ENCODE measurements at regions of chr11 and their contacts with region 1.

Region 1: DNA sequence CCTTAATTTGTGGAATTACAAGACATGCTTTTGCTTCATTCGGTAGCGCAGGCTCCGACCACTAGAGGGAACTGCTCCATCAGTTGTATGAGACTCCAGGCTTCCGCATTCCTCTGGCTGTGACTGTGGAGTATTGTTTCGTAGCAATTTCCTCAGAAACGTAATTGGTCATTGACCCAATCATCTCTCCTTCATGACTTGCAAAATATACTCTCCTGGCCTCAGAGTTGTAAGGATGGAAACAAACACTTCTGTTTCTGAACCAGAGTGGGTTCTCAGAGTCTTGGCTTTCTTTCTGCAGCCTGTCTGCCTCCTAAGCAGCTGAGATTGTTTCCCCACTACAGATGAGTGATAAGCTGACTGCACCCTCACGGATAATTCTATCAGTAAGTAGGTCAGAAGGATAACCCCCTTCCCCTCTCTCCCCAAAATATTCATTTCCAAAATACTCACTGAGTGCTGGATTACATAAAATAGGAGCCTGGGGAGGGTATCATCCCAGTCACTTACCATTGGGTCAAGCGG is 146.8 kb upstream of the ZC3H12C start:
- DNase-seq: peak; percentile 97
- H3K4me3 ChIP-seq: peak overlapping the region in 1 of 3 experiments; percentile 31
- H3K27ac ChIP-seq: peak overlapping the region; percentile 95
- H3K4me1 ChIP-seq: peaks cover 8% of the 10 kb centered on the region
- H3K27me3 ChIP-seq: no peaks in the 10 kb centered on the region
- CTCF ChIP-seq: peak; percentile 91
- POLR2A ChIP-seq: no peak

Region 2: DNA sequence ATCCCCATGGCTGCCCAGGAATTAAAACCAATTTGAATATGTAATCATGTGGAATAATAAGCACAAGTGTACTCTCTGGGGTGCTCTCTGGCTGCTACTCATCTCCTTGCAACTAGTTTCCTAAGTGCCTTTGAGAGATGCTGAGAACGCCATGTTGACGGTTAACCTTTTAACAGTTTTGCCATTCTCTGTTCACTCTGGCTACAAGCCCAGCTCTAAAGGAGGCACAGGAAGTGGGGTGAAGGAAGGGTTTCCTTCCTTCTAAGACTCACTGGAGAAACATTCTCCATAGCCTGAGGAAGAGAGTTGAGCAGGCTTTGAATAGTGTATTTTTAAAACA is 24.8 kb after region 1 on chr11:
- CTCF ChIA-PET with region 1: interaction called, 4 read pairs
- POLR2A ChIA-PET with region 1: no interaction called
- dilution Hi-C with region 1: no loop called
- intact Hi-C with region 1: loop called (anchors 1 kb)
- DNase-seq: peak; percentile 94
- H3K4me3 ChIP-seq: peak overlapping the region in 1 of 3 experiments; percentile 53
- H3K27ac ChIP-seq: peak overlapping the region; percentile 76
- H3K4me1 ChIP-seq: peaks cover 23% of the 10 kb centered on the region
- H3K27me3 ChIP-seq: no peaks in the 10 kb centered on the region
- CTCF ChIP-seq: no peak
- POLR2A ChIP-seq: no peak

Region 3: DNA sequence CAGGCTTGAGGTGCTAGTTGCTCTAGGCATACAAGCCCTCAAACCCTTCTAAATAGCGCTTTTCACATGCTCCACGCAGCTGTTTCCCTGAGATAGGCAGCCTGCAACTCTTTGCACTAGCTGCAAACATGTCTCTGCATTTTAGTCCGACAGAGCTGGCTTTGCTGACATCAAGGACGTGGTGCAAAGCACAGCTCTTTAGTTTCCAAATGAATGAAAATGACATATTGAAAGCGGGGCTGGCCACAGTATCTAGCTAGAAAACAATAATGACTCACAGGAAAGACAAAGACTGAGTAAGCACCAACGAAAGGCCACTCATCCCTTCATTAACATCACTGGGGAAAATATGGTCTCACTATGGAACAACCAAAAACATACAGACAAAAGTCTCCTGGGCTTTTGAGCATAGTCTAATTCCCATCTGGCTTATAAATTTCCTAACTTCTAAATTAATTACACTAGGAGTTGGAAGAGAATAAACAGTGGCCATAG is 131.5 kb after region 1 on chr11:
- CTCF ChIA-PET with region 1: no interaction called
- POLR2A ChIA-PET with region 1: no interaction called
- dilution Hi-C with region 1: no loop called
- intact Hi-C with region 1: no loop called
- DNase-seq: peak; percentile 68
- H3K4me3 ChIP-seq: no peak overlapping the region
- H3K27ac ChIP-seq: peak overlapping the region; percentile 45
- H3K4me1 ChIP-seq: peaks cover 22% of the 10 kb centered on the region
- H3K27me3 ChIP-seq: no peaks in the 10 kb centered on the region
- CTCF ChIP-seq: no peak
- POLR2A ChIP-seq: no peak

Region 4: DNA sequence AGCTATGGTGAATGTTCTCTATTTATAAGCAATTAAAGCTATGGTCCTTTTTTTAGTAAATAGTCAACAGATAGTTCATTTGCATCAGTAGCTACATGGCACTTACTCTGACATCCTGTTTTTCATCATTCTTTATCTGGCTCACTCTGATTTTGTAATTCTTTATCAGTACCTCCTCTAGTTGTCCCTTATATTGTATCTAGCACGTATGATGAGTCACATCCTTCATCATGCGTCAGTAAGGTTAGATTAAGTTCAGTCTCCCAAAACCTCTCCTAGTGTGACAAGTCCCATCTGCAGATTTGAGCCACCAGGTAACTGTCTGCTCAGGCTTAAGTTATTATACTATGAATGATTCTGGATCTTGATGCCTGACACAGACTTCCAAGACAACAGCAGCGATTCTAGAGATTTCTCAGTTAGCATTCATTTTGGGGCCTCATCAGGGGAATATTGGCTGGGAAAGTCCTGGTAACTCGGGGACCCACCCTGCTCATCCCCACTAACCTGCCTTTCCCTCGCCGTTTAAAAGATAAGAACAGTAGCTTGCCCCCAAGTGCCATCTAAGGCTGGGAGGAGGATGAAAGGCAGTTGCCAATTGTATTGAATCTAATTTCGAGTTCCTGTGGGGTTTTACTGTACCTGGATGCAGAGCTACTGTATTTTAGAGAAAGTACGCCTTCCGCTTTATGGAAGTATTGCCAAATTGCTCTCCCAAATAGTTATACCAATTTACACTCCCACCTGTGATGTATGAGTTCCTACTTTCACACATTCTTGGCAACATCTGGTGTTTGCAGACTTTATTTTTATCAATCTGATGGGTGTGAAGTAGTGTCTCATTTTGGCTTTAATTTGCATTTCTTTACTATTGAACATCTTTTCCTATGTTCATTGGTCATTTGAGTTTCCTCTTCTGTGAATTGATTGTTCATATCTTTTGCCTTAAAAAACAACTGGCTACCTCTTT is 202.7 kb after region 1 on chr11:
- CTCF ChIA-PET with region 1: no interaction called
- POLR2A ChIA-PET with region 1: no interaction called
- dilution Hi-C with region 1: no loop called
- intact Hi-C with region 1: loop called (anchors 1 kb)
- DNase-seq: peak; percentile 79
- H3K4me3 ChIP-seq: no peak overlapping the region
- H3K27ac ChIP-seq: peak overlapping the region; percentile 74
- H3K4me1 ChIP-seq: peaks cover 33% of the 10 kb centered on the region
- H3K27me3 ChIP-seq: no peaks in the 10 kb centered on the region
- CTCF ChIP-seq: no peak
- POLR2A ChIP-seq: no peak

Region 5: GRCh38 chr11:110296226-110297075 is 350.1 kb after region 1 on chr11 and contains the start of gene RDX:
- CTCF ChIA-PET with region 1: no interaction called
- POLR2A ChIA-PET with region 1: no interaction called
- dilution Hi-C with region 1: no loop called
- intact Hi-C with region 1: loop called (anchors 5 kb)
- DNase-seq: peak; percentile 78
- H3K4me3 ChIP-seq: peak within 1 kb of the TSS; percentile 94 to 96 (median 95)
- H3K27ac ChIP-seq: peak within 1 kb of the TSS; percentile 96
- H3K4me1 ChIP-seq: peaks cover 31% of the 10 kb centered on the region
- H3K27me3 ChIP-seq: no peaks in the 10 kb centered on the region
- CTCF ChIP-seq: peak in 1 of 2 donors; percentile 1
- POLR2A ChIP-seq: peak; percentile 75
- total RNA-seq, gene RDX: 239 and 280 TPM in 2 replicates

Region 6: GRCh38 chr11:110376711-110377324 is 430.4 kb after region 1 on chr11:
- CTCF ChIA-PET with region 1: interaction called, 8 read pairs
- POLR2A ChIA-PET with region 1: no interaction called
- dilution Hi-C with region 1: no loop called
- intact Hi-C with region 1: loop called (anchors 1 kb)
- DNase-seq: peak; percentile 93
- H3K4me3 ChIP-seq: no peak overlapping the region
- H3K27ac ChIP-seq: no peak overlapping the region
- H3K4me1 ChIP-seq: peaks cover 24% of the 10 kb centered on the region
- H3K27me3 ChIP-seq: no peaks in the 10 kb centered on the region
- CTCF ChIP-seq: peak; percentile 52 to 72
- POLR2A ChIP-seq: no peak

Region 7: GRCh38 chr11:110711776-110712658 is 765.6 kb after region 1 on chr11 and contains the start of gene ARHGAP20:
- CTCF ChIA-PET with region 1: no interaction called
- POLR2A ChIA-PET with region 1: no interaction called
- dilution Hi-C with region 1: no loop called
- intact Hi-C with region 1: loop called (anchors 5 kb)
- DNase-seq: peak; percentile 62
- H3K4me3 ChIP-seq: peak within 1 kb of the TSS; percentile 41 to 55 (median 55)
- H3K27ac ChIP-seq: no peak within 1 kb of the TSS
- H3K4me1 ChIP-seq: peaks cover 21% of the 10 kb centered on the region
- H3K27me3 ChIP-seq: no peaks in the 10 kb centered on the region
- CTCF ChIP-seq: no peak
- POLR2A ChIP-seq: peak; percentile 25
- total RNA-seq, gene ARHGAP20: 1.1 and 1.4 TPM in 2 replicates

Measured in endothelial cell of umbilical vein (primary cell).